HCT116 (cell line): ENCODE measurements at regions of chr6 and their contacts with region 1.

Region 1: GRCh38 chr6:29696155-29697125 is 15.5 kb upstream of the ZFP57 start:
- DNase-seq: no peak
- ATAC-seq: peak; percentile 84
- H3K4me3 ChIP-seq: no peak overlapping the region
- H3K27ac ChIP-seq: no peak overlapping the region
- H3K4me1 ChIP-seq: no peaks in the 10 kb centered on the region
- H3K27me3 ChIP-seq: no peaks in the 10 kb centered on the region
- CTCF ChIP-seq: peak; percentile 46 to 85 (median 70); a peak in 5 of 6 replicates
- POLR2A ChIP-seq: no peak
- RAD21 ChIP-seq: peak; percentile 42

Region 2: GRCh38 chr6:29376003-29376402 is 320.4 kb before region 1 on chr6:
- CTCF ChIA-PET with region 1: interaction called, 17 read pairs
- POLR2A ChIA-PET with region 1: no interaction called
- RAD21 ChIA-PET with region 1: no interaction called
- intact Hi-C with region 1: loop called (anchors 5 kb)
- DNase-seq: peak; percentile 19
- ATAC-seq: peak; percentile 73; the same call in 1 of the 2 replicates
- H3K4me3 ChIP-seq: no peak overlapping the region
- H3K27ac ChIP-seq: no peak overlapping the region
- H3K4me1 ChIP-seq: no peaks in the 10 kb centered on the region
- H3K27me3 ChIP-seq: no peaks in the 10 kb centered on the region
- CTCF ChIP-seq: peak in 2 of 3 experiments; percentile 17 to 49; a peak in 2 of 6 replicates
- POLR2A ChIP-seq: no peak
- RAD21 ChIP-seq: peak; percentile 58

Region 3: GRCh38 chr6:29490552-29490951 is 205.9 kb before region 1 on chr6:
- CTCF ChIA-PET with region 1: no interaction called
- POLR2A ChIA-PET with region 1: no interaction called
- RAD21 ChIA-PET with region 1: no interaction called
- intact Hi-C with region 1: no loop called
- DNase-seq: no peak
- ATAC-seq: no peak
- H3K4me3 ChIP-seq: no peak overlapping the region
- H3K27ac ChIP-seq: no peak overlapping the region
- H3K4me1 ChIP-seq: no peaks in the 10 kb centered on the region
- H3K27me3 ChIP-seq: peaks cover 8% of the 10 kb centered on the region; the same call in 1 of the 2 replicates
- CTCF ChIP-seq: no peak
- POLR2A ChIP-seq: no peak
- RAD21 ChIP-seq: no peak

Region 4: DNA sequence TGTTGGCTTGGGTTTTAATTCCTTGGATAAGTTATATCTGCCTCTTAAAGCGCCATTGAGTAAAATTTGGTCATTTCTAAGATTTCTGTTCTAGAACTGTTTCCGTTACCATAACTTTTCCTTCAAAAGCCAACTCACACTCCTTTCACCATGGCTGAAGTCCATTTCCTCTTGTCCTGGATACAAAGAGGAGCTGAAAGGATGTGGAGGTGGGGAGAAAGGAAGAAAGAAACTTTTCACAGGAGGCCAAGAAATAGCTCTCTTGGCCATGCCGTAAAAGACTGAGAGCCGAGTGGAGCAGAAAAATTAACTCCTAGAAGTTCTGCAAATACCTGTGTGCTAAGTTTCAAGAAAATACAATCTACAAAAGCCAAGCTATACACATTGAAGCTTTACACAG is 85.0 kb before region 1 on chr6:
- CTCF ChIA-PET with region 1: no interaction called
- POLR2A ChIA-PET with region 1: no interaction called
- RAD21 ChIA-PET with region 1: no interaction called
- intact Hi-C with region 1: no loop called
- DNase-seq: no peak
- ATAC-seq: no peak
- H3K4me3 ChIP-seq: no peak overlapping the region
- H3K27ac ChIP-seq: no peak overlapping the region
- H3K4me1 ChIP-seq: no peaks in the 10 kb centered on the region
- H3K27me3 ChIP-seq: no peaks in the 10 kb centered on the region
- CTCF ChIP-seq: no peak
- POLR2A ChIP-seq: no peak
- RAD21 ChIP-seq: no peak

Region 5: GRCh38 chr6:29685718-29686326 is 10.6 kb before region 1 on chr6:
- CTCF ChIA-PET with region 1: interaction called, 11 read pairs
- POLR2A ChIA-PET with region 1: no interaction called
- RAD21 ChIA-PET with region 1: no interaction called
- intact Hi-C with region 1: no loop called
- DNase-seq: no peak
- ATAC-seq: no peak
- H3K4me3 ChIP-seq: no peak overlapping the region
- H3K27ac ChIP-seq: no peak overlapping the region
- H3K4me1 ChIP-seq: no peaks in the 10 kb centered on the region
- H3K27me3 ChIP-seq: no peaks in the 10 kb centered on the region
- CTCF ChIP-seq: no peak
- POLR2A ChIP-seq: no peak
- RAD21 ChIP-seq: no peak; the same call in 1 of the 2 replicates

Region 6: GRCh38 chr6:29752451-29753308 is 56.2 kb after region 1 on chr6:
- CTCF ChIA-PET with region 1: no interaction called
- POLR2A ChIA-PET with region 1: no interaction called
- RAD21 ChIA-PET with region 1: no interaction called
- intact Hi-C with region 1: no loop called
- DNase-seq: peak; percentile 90
- ATAC-seq: peak; percentile 79
- H3K4me3 ChIP-seq: peak overlapping the region; percentile 63 to 83
- H3K27ac ChIP-seq: peak overlapping the region; percentile 74
- H3K4me1 ChIP-seq: peaks cover 2 to 27% of the 10 kb centered on the region in 2 experiments; a peak in 3 of 4 replicates
- H3K27me3 ChIP-seq: no peaks in the 10 kb centered on the region
- CTCF ChIP-seq: peak; percentile 98 to 99 (median 99)
- POLR2A ChIP-seq: peak; percentile 16
- RAD21 ChIP-seq: peak; percentile 81